ENCODE measurements at regions of chr6 and their contacts with region 1.

Region 1: GRCh38 chr6:20291764-20292580 is 79.7 kb upstream of the MBOAT1 start:
- DNase-seq: no peak

Region 2: DNA sequence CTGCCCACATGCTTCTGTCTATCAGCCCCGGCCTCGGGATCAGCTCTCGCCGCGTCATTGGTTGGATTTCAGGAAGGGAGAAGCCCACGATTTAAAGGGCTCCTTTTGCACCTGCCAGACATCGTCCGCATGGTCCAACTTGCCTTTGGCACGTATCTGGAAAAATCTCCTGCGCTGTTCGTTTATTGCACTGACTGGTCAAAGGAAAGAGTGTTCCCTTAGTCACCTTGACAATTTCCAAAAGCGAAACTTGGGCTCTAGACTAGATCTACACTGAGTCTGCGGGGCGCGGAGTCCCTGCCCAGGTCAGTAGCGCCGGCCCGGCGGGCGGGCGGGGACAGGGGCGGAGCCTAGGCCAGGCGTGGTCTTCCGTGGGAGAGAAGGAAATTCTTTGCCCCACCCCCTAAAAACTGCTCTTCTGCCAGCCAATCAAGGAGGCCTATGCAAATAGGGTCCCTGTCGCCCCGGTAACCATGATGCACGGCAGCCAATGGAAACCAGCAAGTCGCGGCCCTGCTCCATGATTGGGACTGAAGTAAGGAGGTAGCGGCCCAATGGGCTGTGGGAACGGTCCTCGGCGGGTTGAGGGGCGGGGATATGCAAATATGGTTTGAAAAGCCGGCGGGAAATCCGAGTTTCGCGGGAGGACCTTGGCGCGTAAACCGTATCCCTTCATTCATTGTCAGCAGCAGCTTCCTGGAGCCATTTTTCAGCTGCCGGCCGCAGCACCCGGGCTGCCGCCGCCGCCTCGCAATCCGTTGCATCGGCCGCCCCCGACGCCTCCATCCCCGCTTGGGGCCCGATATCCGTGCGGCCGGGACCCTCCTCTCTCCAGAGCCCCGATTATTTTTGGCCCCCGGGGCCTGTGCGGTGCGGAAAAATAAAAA is 109.5 kb after region 1 on chr6 and contains the start of gene E2F3:
- intact Hi-C with region 1: loop called in 1 of 2 experiments (anchors 10 kb)
- DNase-seq: peak; percentile 100
- total RNA-seq, gene E2F3: 8.1 to 9.9 TPM

Measured in posterior vena cava (tissue), 2 donors.